ENCODE measurements at regions of chr6 and their contacts with region 1.

Region 1: GRCh38 chr6:135535989-135536414 is 38.5 kb upstream of the AHI1 start:
- DNase-seq: no peak
- H3K4me3 ChIP-seq: no peak overlapping the region
- H3K27ac ChIP-seq: no peak overlapping the region
- H3K4me1 ChIP-seq: no peaks in the 10 kb centered on the region
- H3K27me3 ChIP-seq: no peaks in the 10 kb centered on the region
- CTCF ChIP-seq: peak; percentile 38 to 71 (median 51)
- POLR2A ChIP-seq: no peak

Region 2: DNA sequence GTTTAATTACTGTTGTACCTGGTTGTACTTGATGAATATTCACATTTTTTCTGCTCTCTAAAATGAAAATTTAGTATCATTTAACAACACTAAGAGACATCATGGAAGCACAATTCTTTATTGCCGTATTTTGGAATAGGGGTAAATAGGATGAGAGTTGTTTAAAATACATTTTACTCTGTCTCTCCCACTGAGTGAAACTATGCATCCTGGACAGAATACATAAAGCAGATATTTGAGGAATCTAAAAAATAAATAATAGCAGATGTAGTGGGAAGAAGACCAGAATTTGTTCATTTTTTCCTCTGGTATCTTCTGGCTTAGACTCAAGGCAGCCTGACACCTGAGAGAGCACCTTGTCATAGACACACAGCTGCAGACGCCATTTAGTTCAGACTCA is 80.7 kb after region 1 on chr6:
- intact Hi-C with region 1: no loop called
- DNase-seq: no peak
- H3K4me3 ChIP-seq: no peak overlapping the region
- H3K27ac ChIP-seq: no peak overlapping the region
- H3K4me1 ChIP-seq: no peaks in the 10 kb centered on the region
- H3K27me3 ChIP-seq: no peaks in the 10 kb centered on the region
- CTCF ChIP-seq: no peak
- POLR2A ChIP-seq: no peak

Region 3: GRCh38 chr6:135759831-135760230 is 223.8 kb after region 1 on chr6:
- intact Hi-C with region 1: no loop called
- DNase-seq: no peak
- H3K4me3 ChIP-seq: no peak overlapping the region
- H3K27ac ChIP-seq: no peak overlapping the region
- H3K4me1 ChIP-seq: no peaks in the 10 kb centered on the region
- H3K27me3 ChIP-seq: peaks cover 3% of the 10 kb centered on the region
- CTCF ChIP-seq: no peak
- POLR2A ChIP-seq: no peak

Region 4: DNA sequence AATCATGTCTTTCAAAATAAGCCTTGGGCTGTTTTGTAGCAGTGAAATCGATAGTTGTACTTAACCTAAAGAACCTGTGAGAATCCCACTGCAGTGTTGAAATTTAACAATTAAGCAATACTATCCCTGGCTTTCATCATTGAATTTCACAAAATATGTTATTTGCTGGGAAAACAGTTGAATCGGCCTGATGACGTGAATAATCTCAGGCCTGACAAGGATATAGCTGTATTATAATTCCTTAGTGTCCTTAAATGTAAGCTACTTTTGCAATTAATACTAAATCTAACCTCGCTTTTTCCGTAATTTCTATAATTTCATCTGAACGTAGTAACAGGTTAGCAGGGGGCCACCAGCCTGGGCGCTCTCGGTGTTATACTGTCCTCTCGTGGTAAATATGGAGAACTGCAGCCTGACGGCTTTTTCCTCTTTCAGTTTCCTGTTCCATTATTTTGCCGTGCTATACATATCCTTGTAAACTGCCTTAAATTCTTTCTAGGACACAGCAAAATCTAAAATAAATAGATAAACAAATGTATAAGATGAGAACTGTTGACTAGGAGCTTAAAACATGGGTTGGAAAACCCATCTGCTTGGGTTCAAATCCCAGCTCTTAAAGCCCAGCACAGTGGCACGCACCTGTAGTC is 690.1 kb after region 1 on chr6:
- intact Hi-C with region 1: loop called (anchors 10 kb)
- DNase-seq: peak; percentile 76
- H3K4me3 ChIP-seq: peak overlapping the region in 1 of 2 donors; percentile 8
- H3K27ac ChIP-seq: no peak overlapping the region
- H3K4me1 ChIP-seq: peaks cover 9% of the 10 kb centered on the region
- H3K27me3 ChIP-seq: no peaks in the 10 kb centered on the region
- CTCF ChIP-seq: peak; percentile 99 to 100 (median 100)
- POLR2A ChIP-seq: no peak

Measured in testis (tissue), 5 donors.